Activated naive CD4-positive, alpha-beta T cell treated with anti-CD3 and anti-CD28 coated beads, Interleukin-2, amount 10 ng/mL, durations not matched to agents 7 days and 5 days (primary cell): ENCODE measurements at regions of chr17 and their contacts with region 1.

Region 1: GRCh38 chr17:39653662-39654331 is 11.4 kb upstream of the TCAP start:
- DNase-seq: peak; percentile 90
- H3K4me3 Mint-ChIP-seq: no peak overlapping the region
- H3K27ac Mint-ChIP-seq: no peak overlapping the region
- H3K4me1 Mint-ChIP-seq: peaks cover 46% of the 10 kb centered on the region
- H3K27me3 Mint-ChIP-seq: no peaks in the 10 kb centered on the region

Region 2: GRCh38 chr17:39484178-39484577 is 169.6 kb before region 1 on chr17:
- CTCF ChIA-PET with region 1: no interaction called
- DNase-seq: no peak
- H3K4me3 Mint-ChIP-seq: no peak overlapping the region
- H3K27ac Mint-ChIP-seq: no peak overlapping the region
- H3K4me1 Mint-ChIP-seq: peaks cover 2% of the 10 kb centered on the region
- H3K27me3 Mint-ChIP-seq: no peaks in the 10 kb centered on the region

Region 3: GRCh38 chr17:39573447-39574298 is 80.1 kb before region 1 on chr17:
- CTCF ChIA-PET with region 1: no interaction called
- DNase-seq: peak; percentile 67
- H3K4me3 Mint-ChIP-seq: peak overlapping the region; percentile 75
- H3K27ac Mint-ChIP-seq: no peak overlapping the region
- H3K4me1 Mint-ChIP-seq: peaks cover 7% of the 10 kb centered on the region
- H3K27me3 Mint-ChIP-seq: peaks cover 41% of the 10 kb centered on the region

Region 4: DNA sequence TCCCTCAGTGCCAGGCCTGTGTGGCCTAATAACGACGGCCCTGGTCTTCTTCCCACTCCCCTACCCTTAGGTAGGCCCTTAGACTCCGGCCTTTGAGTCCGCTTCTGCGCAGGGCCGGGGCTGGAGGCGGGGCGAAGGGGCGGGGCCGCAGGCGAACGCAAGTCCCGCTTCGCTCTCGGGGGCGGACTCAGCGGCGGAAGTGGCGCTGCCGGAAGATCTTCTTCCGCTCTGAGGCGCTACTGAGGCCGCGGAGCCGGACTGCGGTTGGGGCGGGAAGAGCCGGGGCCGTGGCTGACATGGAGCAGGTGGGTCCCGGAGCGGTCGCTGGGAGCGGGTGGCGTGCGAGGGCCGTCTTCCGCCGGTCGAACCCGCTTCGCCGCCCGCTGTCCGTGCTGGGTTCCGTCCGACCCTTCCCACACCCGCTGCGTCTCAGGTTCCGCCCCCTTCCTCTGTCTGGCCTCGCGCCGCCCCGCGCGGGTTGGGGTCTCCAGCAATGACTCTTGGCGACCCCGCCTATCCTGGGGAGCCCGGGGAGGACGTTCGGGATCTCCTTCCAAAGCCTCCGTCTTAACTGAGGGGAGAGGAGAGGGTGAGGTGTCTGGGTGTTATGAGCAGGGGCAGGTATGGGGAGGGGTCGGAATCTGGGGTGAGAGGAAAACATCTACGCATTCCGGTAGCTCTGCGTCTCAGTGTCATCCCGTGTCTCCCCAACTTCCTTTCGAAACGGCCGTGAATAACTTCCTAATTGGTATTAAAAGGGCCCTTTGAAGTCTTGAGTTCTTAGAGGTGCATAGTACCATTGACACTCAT is 16.7 kb before region 1 on chr17 and contains the start of gene STARD3:
- CTCF ChIA-PET with region 1: interaction called, 55 read pairs
- DNase-seq: peak; percentile 96
- H3K4me3 Mint-ChIP-seq: peak within 1 kb of the TSS; percentile 83
- H3K27ac Mint-ChIP-seq: peak within 1 kb of the TSS; percentile 77
- H3K4me1 Mint-ChIP-seq: peaks cover 52% of the 10 kb centered on the region
- H3K27me3 Mint-ChIP-seq: peaks cover 20% of the 10 kb centered on the region

Region 5: DNA sequence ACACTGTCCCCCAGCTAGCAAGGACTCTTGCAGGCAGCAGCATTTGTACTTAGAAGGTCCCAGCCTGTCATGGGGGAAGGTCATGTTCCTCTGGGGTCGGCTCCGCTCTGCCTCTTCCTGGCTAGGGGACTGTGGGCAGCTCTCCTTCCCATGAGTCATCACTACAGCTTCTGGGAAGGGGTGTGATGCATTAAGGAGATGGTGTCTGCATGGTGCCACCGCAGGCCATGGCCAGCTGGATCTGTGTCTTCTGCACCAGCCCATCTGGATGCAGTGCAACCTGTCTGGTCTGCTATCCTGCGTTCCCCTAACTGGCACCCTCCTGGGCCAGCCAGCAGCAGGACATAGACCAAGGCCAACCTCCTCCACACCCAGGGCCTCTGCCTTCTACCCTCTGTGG is 10.5 kb before region 1 on chr17:
- CTCF ChIA-PET with region 1: interaction called, 21 read pairs
- DNase-seq: no peak
- H3K4me3 Mint-ChIP-seq: no peak overlapping the region
- H3K27ac Mint-ChIP-seq: no peak overlapping the region
- H3K4me1 Mint-ChIP-seq: peaks cover 46% of the 10 kb centered on the region
- H3K27me3 Mint-ChIP-seq: no peaks in the 10 kb centered on the region

Region 6: GRCh38 chr17:39668199-39668966 is 14.6 kb after region 1 on chr17 and contains the start of gene PNMT:
- CTCF ChIA-PET with region 1: interaction called, 15 read pairs
- DNase-seq: peak; percentile 79
- H3K4me3 Mint-ChIP-seq: peak within 1 kb of the TSS; percentile 46
- H3K27ac Mint-ChIP-seq: no peak within 1 kb of the TSS
- H3K4me1 Mint-ChIP-seq: peaks cover 14% of the 10 kb centered on the region
- H3K27me3 Mint-ChIP-seq: peaks cover 86% of the 10 kb centered on the region

Region 7: GRCh38 chr17:39750131-39751015 is 96.6 kb after region 1 on chr17:
- CTCF ChIA-PET with region 1: no interaction called
- DNase-seq: peak; percentile 15
- H3K4me3 Mint-ChIP-seq: no peak overlapping the region
- H3K27ac Mint-ChIP-seq: no peak overlapping the region
- H3K4me1 Mint-ChIP-seq: peaks cover 24% of the 10 kb centered on the region
- H3K27me3 Mint-ChIP-seq: peaks cover 34% of the 10 kb centered on the region